Activated B cell treated with CpG ODN at 0.5 μM for 24 hours (primary cell): ENCODE measurements at regions of chr5 and their contacts with region 1.

Region 1: GRCh38 chr5:127909078-127909477 is 174.5 kb upstream of the SLC12A2 start:
- DNase-seq: no peak
- ATAC-seq: no peak
- H3K4me3 Mint-ChIP-seq: no peak overlapping the region
- H3K27ac Mint-ChIP-seq: no peak overlapping the region
- H3K4me1 Mint-ChIP-seq: no peaks in the 10 kb centered on the region
- H3K27me3 Mint-ChIP-seq: no peaks in the 10 kb centered on the region
- CTCF ChIP-seq: no peak

Region 2: DNA sequence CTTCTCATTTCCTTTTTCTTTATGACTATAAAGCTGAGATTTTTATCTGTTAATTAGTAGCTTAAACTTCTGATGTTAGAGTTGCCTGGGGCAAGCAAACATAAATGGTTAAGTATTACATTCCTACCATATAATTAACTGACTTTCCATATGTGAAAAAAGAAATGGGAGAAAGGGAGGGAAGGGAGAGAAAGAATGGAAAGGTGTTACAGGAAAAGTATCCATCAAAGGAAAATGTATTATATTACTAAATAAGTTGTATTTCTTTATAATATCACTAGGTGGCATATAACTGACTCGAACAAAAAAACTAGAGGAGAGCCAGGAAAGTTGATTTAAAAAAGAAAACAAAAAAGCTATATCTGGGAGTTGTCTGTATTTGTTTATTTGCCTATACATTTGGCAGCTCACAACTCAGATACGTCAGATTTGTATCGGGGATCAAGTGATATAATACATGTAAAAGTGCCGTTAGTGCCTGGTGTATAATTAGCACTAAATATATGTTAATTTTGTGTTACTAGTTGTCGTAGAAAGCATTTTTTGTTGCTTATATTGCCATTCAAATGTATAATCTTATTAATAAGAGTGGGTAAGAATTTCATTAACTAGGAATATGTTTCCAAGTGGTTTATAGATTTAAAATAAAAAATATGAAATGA is 1491.4 kb after region 1 on chr5:
- CTCF ChIA-PET with region 1: no interaction called
- POLR2A ChIA-PET with region 1: interaction called, 11 read pairs
- intact Hi-C with region 1: no loop called
- DNase-seq: no peak
- ATAC-seq: no peak
- H3K4me3 Mint-ChIP-seq: no peak overlapping the region
- H3K27ac Mint-ChIP-seq: no peak overlapping the region
- H3K4me1 Mint-ChIP-seq: no peaks in the 10 kb centered on the region
- H3K27me3 Mint-ChIP-seq: no peaks in the 10 kb centered on the region
- CTCF ChIP-seq: no peak